ENCODE measurements at regions of chr10 and their contacts with region 1.

Region 1: GRCh38 chr10:69408318-69409175 is 8.2 kb downstream of the TACR2 start:
- DNase-seq: peak; percentile 93
- H3K4me3 Mint-ChIP-seq: peak overlapping the region; percentile 71
- H3K27ac Mint-ChIP-seq: peak overlapping the region; percentile 69
- H3K4me1 Mint-ChIP-seq: peaks cover 34% of the 10 kb centered on the region
- H3K27me3 Mint-ChIP-seq: no peaks in the 10 kb centered on the region

Region 2: DNA sequence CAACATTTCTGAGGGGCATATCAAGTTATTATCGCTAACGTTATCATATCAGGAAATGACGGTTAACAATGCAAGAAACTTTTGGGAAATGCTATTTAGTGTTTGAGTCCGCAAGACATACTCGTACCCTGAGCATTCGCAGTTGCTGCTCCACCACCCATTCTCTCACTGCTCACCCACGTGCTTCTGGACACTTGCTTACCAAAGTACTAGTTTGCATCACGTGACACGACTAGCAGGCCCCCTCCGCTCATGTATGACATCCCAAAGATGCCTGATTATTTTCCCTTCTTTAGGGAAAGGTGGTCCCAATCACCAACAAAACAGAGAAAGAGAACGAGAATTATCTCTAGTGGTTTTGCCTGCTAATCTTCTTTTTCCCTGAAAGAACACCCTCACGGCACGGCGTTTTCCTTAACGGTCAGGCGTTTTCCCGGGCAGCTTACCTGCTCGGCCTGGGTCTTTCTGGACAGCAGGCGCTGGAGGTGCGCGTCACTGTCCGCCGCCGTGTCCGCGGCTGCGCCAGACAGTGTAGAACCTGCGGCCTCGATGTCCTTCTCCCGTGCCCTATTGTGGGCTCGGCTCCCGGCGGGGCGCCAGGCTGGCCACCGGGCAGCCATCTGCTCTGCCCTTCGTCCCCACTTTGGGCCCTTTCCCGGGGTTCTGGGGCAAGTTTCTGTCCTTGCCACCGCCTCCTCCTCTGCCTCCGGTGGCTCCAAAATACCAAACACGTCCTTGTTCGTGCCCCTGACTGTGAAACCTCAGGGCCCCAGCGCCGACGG is 228.6 kb before region 1 on chr10 and contains the start of gene SUPV3L1:
- CTCF ChIA-PET with region 1: no interaction called
- POLR2A ChIA-PET with region 1: no interaction called
- DNase-seq: peak; percentile 87
- H3K4me3 Mint-ChIP-seq: peak within 1 kb of the TSS; percentile 92
- H3K27ac Mint-ChIP-seq: peak within 1 kb of the TSS; percentile 98
- H3K4me1 Mint-ChIP-seq: peaks cover 45% of the 10 kb centered on the region
- H3K27me3 Mint-ChIP-seq: no peaks in the 10 kb centered on the region
- total RNA-seq, gene SUPV3L1: 34.6 to 39.1 TPM

Region 3: DNA sequence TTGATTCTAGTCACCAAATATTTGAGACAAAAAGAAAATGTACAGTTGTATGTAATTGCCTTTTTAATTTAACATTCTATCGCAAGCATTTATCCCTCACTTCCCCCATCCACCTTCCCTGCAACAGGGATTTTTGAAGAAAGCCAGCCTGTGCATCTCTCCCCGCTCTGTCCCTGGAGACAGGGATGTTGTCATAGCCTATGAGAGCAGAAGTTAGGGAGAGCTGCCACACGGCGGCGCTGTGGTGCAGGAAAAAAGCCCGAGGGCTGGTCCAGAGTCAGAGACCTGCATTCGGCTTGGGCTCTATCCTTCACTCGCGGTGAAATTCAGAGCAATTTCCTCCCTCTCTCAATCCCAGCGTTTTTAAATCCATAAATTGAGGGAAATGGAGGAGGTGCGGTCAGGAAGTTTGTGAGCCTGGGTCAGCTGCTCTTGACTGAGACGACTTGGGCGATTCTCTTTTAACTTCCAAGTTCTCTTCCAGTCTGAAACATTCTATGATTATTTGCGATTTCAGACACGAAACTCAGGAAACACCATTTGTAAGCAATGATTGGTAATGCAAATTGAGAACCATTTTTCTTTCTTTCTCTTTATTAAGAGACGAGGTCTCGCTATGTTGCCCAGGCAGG is 170.9 kb before region 1 on chr10:
- CTCF ChIA-PET with region 1: interaction called, 13 read pairs
- POLR2A ChIA-PET with region 1: no interaction called
- DNase-seq: peak; percentile 91
- H3K4me3 Mint-ChIP-seq: no peak overlapping the region
- H3K27ac Mint-ChIP-seq: no peak overlapping the region
- H3K4me1 Mint-ChIP-seq: peaks cover 63% of the 10 kb centered on the region
- H3K27me3 Mint-ChIP-seq: no peaks in the 10 kb centered on the region

Region 4: GRCh38 chr10:69318106-69318866 is 90.3 kb before region 1 on chr10:
- CTCF ChIA-PET with region 1: interaction called, 11 read pairs
- POLR2A ChIA-PET with region 1: interaction called, 21 read pairs
- DNase-seq: peak; percentile 92
- H3K4me3 Mint-ChIP-seq: peak overlapping the region; percentile 97
- H3K27ac Mint-ChIP-seq: peak overlapping the region; percentile 94
- H3K4me1 Mint-ChIP-seq: peaks cover 55% of the 10 kb centered on the region
- H3K27me3 Mint-ChIP-seq: no peaks in the 10 kb centered on the region

Region 5: GRCh38 chr10:69392481-69393000 is 16.0 kb before region 1 on chr10:
- CTCF ChIA-PET with region 1: interaction called, 17 read pairs
- POLR2A ChIA-PET with region 1: interaction called, 5 read pairs
- DNase-seq: peak; percentile 88
- H3K4me3 Mint-ChIP-seq: no peak overlapping the region
- H3K27ac Mint-ChIP-seq: peak overlapping the region; percentile 67
- H3K4me1 Mint-ChIP-seq: peaks cover 32% of the 10 kb centered on the region
- H3K27me3 Mint-ChIP-seq: no peaks in the 10 kb centered on the region

Region 6: GRCh38 chr10:69397972-69398371 is 10.6 kb before region 1 on chr10:
- CTCF ChIA-PET with region 1: interaction called, 17 read pairs
- POLR2A ChIA-PET with region 1: interaction called, 5 read pairs
- DNase-seq: no peak
- H3K4me3 Mint-ChIP-seq: no peak overlapping the region
- H3K27ac Mint-ChIP-seq: no peak overlapping the region
- H3K4me1 Mint-ChIP-seq: no peaks in the 10 kb centered on the region
- H3K27me3 Mint-ChIP-seq: no peaks in the 10 kb centered on the region

Region 7: GRCh38 chr10:69506834-69507721 is 98.5 kb after region 1 on chr10:
- CTCF ChIA-PET with region 1: interaction called, 46 read pairs
- POLR2A ChIA-PET with region 1: no interaction called
- DNase-seq: peak; percentile 18
- H3K4me3 Mint-ChIP-seq: peak overlapping the region; percentile 12
- H3K27ac Mint-ChIP-seq: peak overlapping the region; percentile 68
- H3K4me1 Mint-ChIP-seq: peaks cover 14% of the 10 kb centered on the region
- H3K27me3 Mint-ChIP-seq: peaks cover 20% of the 10 kb centered on the region

Region 8: DNA sequence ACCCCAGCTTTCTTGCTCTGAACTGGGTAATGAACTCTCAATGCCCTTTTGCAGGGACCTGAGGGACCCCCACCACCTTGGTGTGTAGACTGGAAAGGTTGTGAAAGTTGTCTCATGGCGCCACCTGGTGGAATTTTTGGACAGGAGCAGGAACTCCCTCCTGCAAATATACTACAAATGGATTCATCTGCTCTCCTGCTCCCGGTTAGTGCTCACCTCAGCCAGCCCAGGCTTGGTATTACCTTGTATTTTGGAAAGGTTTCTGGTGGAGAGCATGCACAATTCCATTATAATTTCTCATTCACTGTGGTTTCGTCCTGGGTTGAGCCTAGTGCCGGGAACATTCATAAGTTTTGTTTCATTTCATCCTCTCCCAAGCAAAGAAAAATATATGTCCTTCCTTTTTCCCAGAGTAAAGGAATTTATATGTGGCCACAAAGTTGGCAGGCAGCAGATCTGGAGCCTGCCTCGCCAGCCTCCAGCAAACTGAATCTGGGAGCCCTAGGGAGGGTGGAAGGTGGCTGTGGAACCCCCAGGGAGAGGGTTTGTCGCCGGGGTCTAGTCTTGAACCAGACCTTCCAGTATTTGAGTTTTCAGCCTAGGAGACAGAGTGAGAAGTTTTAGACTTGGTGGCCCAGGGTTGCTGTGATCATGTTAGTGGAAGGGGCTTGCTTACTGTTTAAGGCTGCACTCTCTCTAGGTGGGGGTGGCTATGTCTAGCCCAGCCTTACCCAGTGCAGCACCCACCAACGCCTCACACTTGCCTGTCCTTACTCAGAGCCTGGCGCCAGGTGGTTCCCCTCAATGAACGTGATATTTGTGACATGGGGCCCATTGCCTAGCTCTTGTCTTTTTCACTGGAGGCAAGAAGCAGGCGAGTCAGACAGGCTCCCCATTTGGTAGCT is 231.0 kb after region 1 on chr10:
- CTCF ChIA-PET with region 1: interaction called, 10 read pairs
- POLR2A ChIA-PET with region 1: no interaction called
- DNase-seq: peak; percentile 70
- H3K4me3 Mint-ChIP-seq: no peak overlapping the region
- H3K27ac Mint-ChIP-seq: no peak overlapping the region
- H3K4me1 Mint-ChIP-seq: no peaks in the 10 kb centered on the region
- H3K27me3 Mint-ChIP-seq: no peaks in the 10 kb centered on the region